Activated CD4-positive, alpha-beta memory T cell treated with anti-CD3 and anti-CD28 coated beads for 36 hours (primary cell): ENCODE measurements at regions of chr4 and their contacts with region 1.

Region 1: GRCh38 chr4:162497564-162498167 is 333.9 kb upstream of the FSTL5 start:
- DNase-seq: no peak
- H3K4me3 Mint-ChIP-seq: no peak overlapping the region
- H3K27ac Mint-ChIP-seq: no peak overlapping the region
- H3K4me1 Mint-ChIP-seq: no peaks in the 10 kb centered on the region
- H3K27me3 Mint-ChIP-seq: peaks cover 2% of the 10 kb centered on the region

Region 2: GRCh38 chr4:162847945-162848549 is 350.4 kb after region 1 on chr4:
- CTCF ChIA-PET with region 1: no interaction called
- POLR2A ChIA-PET with region 1: no interaction called
- intact Hi-C with region 1: no loop called
- DNase-seq: no peak
- H3K4me3 Mint-ChIP-seq: no peak overlapping the region
- H3K27ac Mint-ChIP-seq: no peak overlapping the region
- H3K4me1 Mint-ChIP-seq: no peaks in the 10 kb centered on the region
- H3K27me3 Mint-ChIP-seq: no peaks in the 10 kb centered on the region

Region 3: GRCh38 chr4:163042306-163042705 is 544.6 kb after region 1 on chr4:
- CTCF ChIA-PET with region 1: no interaction called
- POLR2A ChIA-PET with region 1: no interaction called
- intact Hi-C with region 1: loop called (anchors 1 kb)
- DNase-seq: no peak
- H3K4me3 Mint-ChIP-seq: no peak overlapping the region
- H3K27ac Mint-ChIP-seq: no peak overlapping the region
- H3K4me1 Mint-ChIP-seq: no peaks in the 10 kb centered on the region
- H3K27me3 Mint-ChIP-seq: peaks cover 1% of the 10 kb centered on the region